ENCODE measurements at regions of chr1 and their contacts with region 1.

Region 1: DNA sequence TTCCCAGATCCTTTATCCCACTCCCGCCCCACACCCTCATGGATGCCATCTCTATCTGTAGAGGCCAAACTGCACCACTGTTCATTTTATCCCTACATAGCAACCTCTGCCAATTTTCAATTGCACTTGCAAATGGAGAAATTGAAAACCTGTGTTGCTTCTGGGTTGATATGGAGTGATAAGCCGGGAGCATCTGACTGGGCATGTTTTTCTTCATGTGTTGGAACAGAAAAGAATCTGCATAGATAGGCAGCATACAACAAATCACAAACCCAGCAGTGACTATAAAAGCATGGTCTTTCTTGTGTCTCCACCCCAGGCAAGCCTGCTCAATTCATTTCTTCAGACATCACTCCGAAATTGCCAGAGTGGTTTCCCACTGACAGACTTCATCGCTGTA is 608.8 kb upstream of the CAMK1G start:
- DNase-seq: no peak
- H3K4me3 ChIP-seq: no peak overlapping the region
- CTCF ChIP-seq: no peak
- POLR2A ChIP-seq: no peak

Region 2: DNA sequence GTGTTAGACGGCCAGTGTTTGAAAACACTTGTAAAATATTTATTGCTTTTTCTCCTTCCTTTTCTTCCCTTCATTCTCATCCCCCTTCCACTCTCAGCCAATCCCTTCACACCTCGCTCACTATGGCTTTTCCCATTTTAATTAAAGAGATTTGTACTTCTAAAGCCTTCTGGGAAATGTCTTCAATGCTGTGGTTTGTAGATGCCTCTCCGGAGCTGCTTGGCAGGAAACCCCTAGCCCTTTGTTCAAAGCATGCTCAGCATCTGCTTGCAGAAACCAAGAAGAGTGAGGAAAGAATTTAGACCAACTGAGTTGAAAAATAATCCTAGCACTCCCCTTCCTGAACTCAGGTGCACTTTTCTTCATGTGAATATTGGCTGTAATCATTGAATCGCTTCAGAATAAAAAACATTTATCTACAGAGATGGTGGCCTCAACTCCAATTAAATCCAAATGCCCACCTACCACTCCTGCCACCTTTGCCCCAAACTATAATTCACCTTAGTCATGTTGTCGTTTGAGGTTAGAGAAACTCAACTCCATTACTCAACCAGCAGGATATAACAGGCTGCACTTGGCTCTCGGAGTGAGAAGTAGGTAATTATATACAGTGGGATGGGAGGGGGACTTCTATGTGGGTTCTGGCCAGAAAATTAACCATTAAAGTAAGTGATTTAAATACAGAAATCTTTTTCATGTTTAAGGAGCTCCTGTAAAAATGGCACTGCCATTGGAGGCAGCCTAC is 50.6 kb before region 1 on chr1:
- intact Hi-C with region 1: loop called (anchors 5 kb)
- DNase-seq: no peak
- H3K4me3 ChIP-seq: no peak overlapping the region
- CTCF ChIP-seq: no peak
- POLR2A ChIP-seq: no peak

Measured in lower leg skin (tissue), 4 donors.